Breast epithelium (tissue), 4 donors: ENCODE measurements at regions of chr1 and their contacts with region 1.

Region 1: DNA sequence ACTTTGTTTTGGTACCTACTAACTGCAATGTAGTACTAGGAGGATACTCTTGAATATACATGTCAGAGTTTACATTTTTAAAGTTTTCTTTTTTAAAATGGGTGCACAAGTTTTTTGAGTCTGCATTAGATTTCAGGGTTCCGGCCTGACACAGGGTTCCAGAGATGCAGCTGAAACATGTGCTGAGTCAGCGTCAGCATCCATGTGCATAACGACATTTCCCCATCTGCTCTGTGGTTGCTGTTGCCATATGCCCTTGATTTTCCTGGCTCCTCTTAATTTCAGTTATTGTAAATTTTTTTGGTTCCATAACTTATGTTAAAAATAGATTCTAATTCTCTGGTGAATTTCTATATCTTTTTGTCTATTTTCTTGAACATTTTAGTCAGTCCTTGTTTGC is 12.3 kb upstream of the METTL13 start:
- DNase-seq: no peak
- H3K4me3 ChIP-seq: no peak overlapping the region
- H3K27ac ChIP-seq: no peak overlapping the region
- H3K4me1 ChIP-seq: no peaks in the 10 kb centered on the region
- H3K27me3 ChIP-seq: no peaks in the 10 kb centered on the region
- CTCF ChIP-seq: no peak
- POLR2A ChIP-seq: no peak

Region 2: GRCh38 chr1:171256940-171257606 is 512.1 kb before region 1 on chr1:
- intact Hi-C with region 1: no loop called
- DNase-seq: peak; percentile 60 to 83
- H3K4me3 ChIP-seq: peak overlapping the region in 2 of 3 donors; percentile 32 to 38
- H3K27ac ChIP-seq: peak overlapping the region; percentile 19 to 92
- H3K4me1 ChIP-seq: no peaks in the 10 kb centered on the region
- H3K27me3 ChIP-seq: no peaks in the 10 kb centered on the region
- CTCF ChIP-seq: no peak
- POLR2A ChIP-seq: no peak

Region 3: GRCh38 chr1:171521567-171521966 is 247.6 kb before region 1 on chr1:
- intact Hi-C with region 1: no loop called
- DNase-seq: no peak
- H3K4me3 ChIP-seq: no peak overlapping the region
- H3K27ac ChIP-seq: no peak overlapping the region
- H3K4me1 ChIP-seq: no peaks in the 10 kb centered on the region
- H3K27me3 ChIP-seq: no peaks in the 10 kb centered on the region
- CTCF ChIP-seq: no peak
- POLR2A ChIP-seq: no peak

Region 4: DNA sequence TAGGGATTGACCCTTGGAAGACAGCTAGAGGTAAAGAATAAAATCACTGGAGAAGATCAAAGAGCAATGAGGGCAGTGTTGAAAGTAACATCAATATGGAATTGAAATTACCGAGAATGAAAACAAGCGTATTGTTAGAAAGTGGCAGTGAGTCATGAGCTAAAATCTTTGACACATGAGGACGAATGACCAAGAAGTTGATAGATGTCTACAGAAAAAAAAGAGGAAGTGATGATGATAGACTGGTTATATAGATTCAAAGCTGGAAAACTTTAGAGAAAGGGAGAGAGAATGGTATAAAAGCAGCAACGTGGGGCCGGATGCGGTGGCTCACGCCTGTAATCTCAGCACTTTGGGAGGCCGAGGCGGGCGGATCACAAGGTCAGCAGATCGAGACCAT is 59.6 kb after region 1 on chr1:
- intact Hi-C with region 1: loop called (anchors 2 kb)
- DNase-seq: no peak
- H3K4me3 ChIP-seq: no peak overlapping the region
- H3K27ac ChIP-seq: no peak overlapping the region
- H3K4me1 ChIP-seq: no peaks in the 10 kb centered on the region
- H3K27me3 ChIP-seq: no peaks in the 10 kb centered on the region
- CTCF ChIP-seq: no peak
- POLR2A ChIP-seq: no peak